Mammary epithelial cell (primary cell): ENCODE measurements at regions of chr15 and their contacts with region 1.

Region 1: GRCh38 chr15:39624806-39625205 is 43.9 kb downstream of the THBS1 start:
- DNase-seq: peak; percentile 86
- H3K4me3 ChIP-seq: no peak overlapping the region
- H3K27ac ChIP-seq: peak overlapping the region; percentile 35
- H3K4me1 ChIP-seq: peaks cover 38% of the 10 kb centered on the region
- H3K27me3 ChIP-seq: no peaks in the 10 kb centered on the region
- CTCF ChIP-seq: peak in 1 of 2 donors; percentile 14

Region 2: GRCh38 chr15:39686000-39686613 is 61.3 kb after region 1 on chr15:
- CTCF ChIA-PET with region 1: no interaction called
- dilution Hi-C with region 1: loop called (anchors 5 kb)
- in situ Hi-C with region 1: no loop called
- intact Hi-C with region 1: loop called (anchors 10 kb)
- DNase-seq: peak; percentile 36
- H3K4me3 ChIP-seq: no peak overlapping the region
- H3K27ac ChIP-seq: no peak overlapping the region
- H3K4me1 ChIP-seq: no peaks in the 10 kb centered on the region
- H3K27me3 ChIP-seq: no peaks in the 10 kb centered on the region
- CTCF ChIP-seq: peak; percentile 70 to 71

Region 3: GRCh38 chr15:39961051-39961450 is 336.2 kb after region 1 on chr15:
- CTCF ChIA-PET with region 1: no interaction called
- dilution Hi-C with region 1: no loop called
- in situ Hi-C with region 1: no loop called
- intact Hi-C with region 1: no loop called
- DNase-seq: no peak
- H3K4me3 ChIP-seq: no peak overlapping the region
- H3K27ac ChIP-seq: no peak overlapping the region
- H3K4me1 ChIP-seq: no peaks in the 10 kb centered on the region
- H3K27me3 ChIP-seq: no peaks in the 10 kb centered on the region
- CTCF ChIP-seq: no peak